Ascending aorta (tissue), 2 donors: ENCODE measurements at regions of chrX and their contacts with region 1.

Region 1: GRCh38 chrX:139881572-139881971 is 51.3 kb downstream of the ATP11C start:
- DNase-seq: no peak
- H3K4me3 ChIP-seq: no peak overlapping the region
- H3K27ac ChIP-seq: peak overlapping the region; percentile 48 to 49
- H3K4me1 ChIP-seq: no peaks in the 10 kb centered on the region
- H3K27me3 ChIP-seq: no peaks in the 10 kb centered on the region
- CTCF ChIP-seq: no peak

Region 2: GRCh38 chrX:139826065-139827044 is 55.2 kb before region 1 on chrX:
- intact Hi-C with region 1: loop called (anchors 5 kb)
- DNase-seq: no peak
- H3K4me3 ChIP-seq: no peak overlapping the region
- H3K27ac ChIP-seq: no peak overlapping the region
- H3K4me1 ChIP-seq: peaks cover 3 to 8% of the 10 kb centered on the region in 2 donors
- H3K27me3 ChIP-seq: no peaks in the 10 kb centered on the region
- CTCF ChIP-seq: no peak